Activated naive CD4-positive, alpha-beta T cell treated with anti-CD3 and anti-CD28 coated beads for 36 hours (primary cell): ENCODE measurements at regions of chr12 and their contacts with region 1.

Region 1: GRCh38 chr12:102484428-102484958 is 4.1 kb upstream of the IGF1 start:
- DNase-seq: peak; percentile 70
- H3K4me3 Mint-ChIP-seq: peak overlapping the region; percentile 32
- H3K27ac Mint-ChIP-seq: peak overlapping the region; percentile 87
- H3K4me1 Mint-ChIP-seq: peaks cover 22% of the 10 kb centered on the region
- H3K27me3 Mint-ChIP-seq: peaks cover 7% of the 10 kb centered on the region

Region 2: DNA sequence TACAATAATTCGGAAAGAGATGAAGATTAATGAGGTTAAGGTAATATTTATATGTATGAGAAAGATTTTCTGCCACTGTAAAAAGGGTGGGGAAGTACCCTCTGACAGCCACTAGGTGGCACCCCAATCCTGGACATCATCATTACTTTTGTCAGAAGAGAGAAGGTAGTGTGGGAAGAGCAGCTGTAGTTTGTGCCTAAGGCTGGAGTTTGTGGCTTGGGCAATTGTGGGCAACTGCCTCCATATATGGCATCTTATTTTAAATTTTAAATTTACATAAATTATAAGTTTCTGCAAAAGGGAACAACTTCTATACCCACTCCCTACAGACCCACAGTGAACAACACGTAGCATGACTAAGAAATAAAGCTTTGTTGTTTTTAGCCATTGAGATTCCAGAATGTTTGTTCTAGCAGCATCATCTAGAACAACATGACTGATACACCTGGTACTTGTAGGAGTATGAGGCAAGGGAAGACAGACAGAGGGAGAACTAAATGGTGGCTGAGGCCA is 710.8 kb before region 1 on chr12:
- CTCF ChIA-PET with region 1: no interaction called
- intact Hi-C with region 1: loop called (anchors 10 kb)
- DNase-seq: peak; percentile 78
- H3K4me3 Mint-ChIP-seq: no peak overlapping the region
- H3K27ac Mint-ChIP-seq: no peak overlapping the region
- H3K4me1 Mint-ChIP-seq: peaks cover 4% of the 10 kb centered on the region
- H3K27me3 Mint-ChIP-seq: no peaks in the 10 kb centered on the region

Region 3: GRCh38 chr12:102095675-102096263 is 388.7 kb before region 1 on chr12:
- CTCF ChIA-PET with region 1: no interaction called
- intact Hi-C with region 1: loop called (anchors 1 kb)
- DNase-seq: no peak
- H3K4me3 Mint-ChIP-seq: no peak overlapping the region
- H3K27ac Mint-ChIP-seq: no peak overlapping the region
- H3K4me1 Mint-ChIP-seq: no peaks in the 10 kb centered on the region
- H3K27me3 Mint-ChIP-seq: no peaks in the 10 kb centered on the region

Region 4: DNA sequence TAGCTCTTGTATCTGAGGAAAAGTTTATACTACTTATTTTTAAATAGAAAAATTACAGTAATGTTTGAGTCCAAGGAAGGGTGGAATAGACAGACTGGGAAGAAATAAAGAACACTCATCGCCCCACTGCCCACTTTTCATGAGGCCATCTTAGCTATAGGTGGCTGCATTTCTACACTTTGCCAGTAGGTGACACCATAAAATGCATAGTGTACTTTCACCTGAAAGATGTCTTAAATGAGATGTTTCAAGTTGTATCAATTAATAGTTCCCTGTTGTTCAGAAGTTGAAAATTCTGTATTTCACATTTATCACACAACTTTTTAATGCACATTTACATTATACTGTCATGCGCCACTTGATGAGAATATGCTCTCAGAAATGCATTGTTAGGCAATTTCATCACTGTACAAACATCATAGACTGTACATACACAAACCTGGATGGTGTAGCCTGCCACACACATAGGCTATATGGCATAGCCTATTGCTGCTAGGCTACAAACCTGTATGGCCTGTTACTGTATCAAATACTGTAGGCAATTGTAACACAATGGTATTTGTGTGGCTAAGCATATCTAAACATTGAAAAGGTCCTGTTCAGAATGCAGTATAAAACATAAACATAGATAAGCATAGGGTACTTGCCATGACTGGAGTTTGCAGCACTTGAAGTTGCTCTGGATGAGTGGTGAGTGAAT is 314.4 kb before region 1 on chr12:
- CTCF ChIA-PET with region 1: interaction called, 7 read pairs
- intact Hi-C with region 1: loop called (anchors 1 kb)
- DNase-seq: peak; percentile 30
- H3K4me3 Mint-ChIP-seq: no peak overlapping the region
- H3K27ac Mint-ChIP-seq: no peak overlapping the region
- H3K4me1 Mint-ChIP-seq: peaks cover 11% of the 10 kb centered on the region
- H3K27me3 Mint-ChIP-seq: no peaks in the 10 kb centered on the region

Region 5: DNA sequence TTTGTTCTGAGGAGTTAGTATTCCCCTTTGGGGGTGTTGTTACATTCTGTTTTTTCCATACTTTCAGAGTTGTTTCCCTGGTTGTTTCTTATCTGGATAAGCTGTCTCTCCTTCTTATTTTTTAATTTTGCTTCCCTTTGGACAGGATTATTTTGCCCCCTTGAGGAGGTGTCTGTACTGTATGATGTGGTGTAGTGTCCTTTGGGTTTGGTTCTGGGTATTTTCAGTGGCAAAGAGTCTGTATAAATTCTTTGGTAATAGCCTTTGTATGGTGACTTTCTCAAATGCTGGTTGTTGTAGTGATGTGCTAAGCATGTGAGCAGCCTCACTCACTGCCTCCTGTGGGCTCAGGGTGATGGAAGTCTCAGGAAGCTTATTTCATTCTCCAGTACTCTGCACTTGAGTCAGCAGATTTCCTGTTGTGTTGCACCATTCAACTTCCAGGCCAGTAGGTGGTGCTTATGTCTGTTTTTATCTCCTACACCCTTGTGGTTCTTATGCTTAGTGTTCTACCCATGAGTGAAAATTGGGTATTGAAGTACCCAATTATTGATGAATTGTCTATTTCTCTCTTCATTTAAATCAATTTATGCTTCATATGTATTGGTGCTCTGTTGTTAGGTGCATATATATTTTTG is 183.6 kb before region 1 on chr12:
- CTCF ChIA-PET with region 1: no interaction called
- intact Hi-C with region 1: loop called (anchors 1 kb)
- DNase-seq: peak; percentile 21
- H3K4me3 Mint-ChIP-seq: no peak overlapping the region
- H3K27ac Mint-ChIP-seq: no peak overlapping the region
- H3K4me1 Mint-ChIP-seq: no peaks in the 10 kb centered on the region
- H3K27me3 Mint-ChIP-seq: peaks cover 3% of the 10 kb centered on the region

Region 6: GRCh38 chr12:102374190-102374589 is 110.3 kb before region 1 on chr12:
- CTCF ChIA-PET with region 1: no interaction called
- intact Hi-C with region 1: loop called (anchors 1 kb)
- DNase-seq: no peak
- H3K4me3 Mint-ChIP-seq: no peak overlapping the region
- H3K27ac Mint-ChIP-seq: no peak overlapping the region
- H3K4me1 Mint-ChIP-seq: peaks cover 5% of the 10 kb centered on the region
- H3K27me3 Mint-ChIP-seq: peaks cover 2% of the 10 kb centered on the region

Region 7: GRCh38 chr12:102421801-102422583 is 62.5 kb before region 1 on chr12:
- CTCF ChIA-PET with region 1: no interaction called
- intact Hi-C with region 1: loop called (anchors 2 kb)
- DNase-seq: no peak
- H3K4me3 Mint-ChIP-seq: no peak overlapping the region
- H3K27ac Mint-ChIP-seq: no peak overlapping the region
- H3K4me1 Mint-ChIP-seq: no peaks in the 10 kb centered on the region
- H3K27me3 Mint-ChIP-seq: peaks cover 19% of the 10 kb centered on the region